H1 (cell line): ENCODE measurements at regions of chr20 and their contacts with region 1.

Region 1: DNA sequence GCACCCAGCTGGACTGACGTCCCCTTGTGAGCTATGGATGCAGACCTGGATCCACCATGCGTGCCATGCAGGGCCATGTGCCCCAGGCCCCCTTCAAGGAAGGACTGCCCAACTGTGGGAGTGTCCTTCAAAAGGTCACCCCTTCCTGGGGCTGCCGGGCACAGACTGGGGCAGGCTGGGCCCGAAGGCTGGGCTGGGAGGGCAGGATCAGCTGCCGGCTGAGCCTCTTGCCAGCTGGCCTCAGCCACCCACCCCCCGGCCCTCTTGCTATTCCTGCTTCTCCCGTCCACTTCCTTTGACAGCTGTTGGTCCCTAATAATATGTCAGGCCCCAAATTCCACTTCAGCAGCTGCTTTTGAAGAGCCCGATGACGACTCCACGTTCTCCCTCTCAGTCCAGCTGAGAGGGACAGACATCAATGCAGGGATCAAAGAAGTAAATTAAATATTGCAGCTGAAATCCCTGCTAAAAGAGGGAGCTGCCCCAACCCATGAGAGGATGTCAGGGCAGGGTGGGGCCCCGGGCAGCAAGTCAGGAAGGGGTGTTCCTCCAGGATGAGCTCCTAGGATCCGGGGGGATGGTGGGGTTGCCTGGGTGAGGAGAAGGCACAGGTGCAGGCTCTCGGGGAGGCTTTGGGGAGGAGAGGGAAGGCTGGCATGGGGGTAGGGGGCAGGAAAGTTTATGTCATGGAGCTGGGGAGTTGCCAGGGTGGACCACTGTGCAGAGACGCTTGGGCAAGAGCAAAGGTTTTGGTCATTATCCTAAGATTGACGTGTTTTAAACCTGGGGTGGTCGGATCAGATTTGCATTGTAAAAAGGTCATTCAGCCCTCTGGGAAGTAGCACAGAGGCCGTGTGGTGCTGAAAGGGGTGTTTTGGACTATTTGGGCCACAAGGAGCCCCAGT is 185.0 kb downstream of the ANKRD60 start:
- DNase-seq: peak in 1 of 2 experiments; percentile 40
- H3K4me3 ChIP-seq: no peak overlapping the region
- H3K27ac ChIP-seq: no peak overlapping the region
- H3K4me1 ChIP-seq: peaks cover 0 to 4% (median 3%) of the 10 kb centered on the region in 4 experiments; a peak in 4 of 7 replicates
- H3K27me3 ChIP-seq: no peaks in the 10 kb centered on the region
- CTCF ChIP-seq: no peak
- EP300 ChIP-seq: no peak
- POLR2A ChIP-seq: no peak
- RAD21 ChIP-seq: no peak

Region 2: GRCh38 chr20:58028123-58028522 is 15.4 kb before region 1 on chr20:
- CTCF ChIA-PET with region 1: interaction called, 10 read pairs
- POLR2A ChIA-PET with region 1: no interaction called
- DNase-seq: peak in 1 of 2 experiments; percentile 76
- H3K4me3 ChIP-seq: no peak overlapping the region
- H3K27ac ChIP-seq: no peak overlapping the region
- H3K4me1 ChIP-seq: no peaks in the 10 kb centered on the region
- H3K27me3 ChIP-seq: no peaks in the 10 kb centered on the region; a peak in 2 of 7 replicates
- CTCF ChIP-seq: peak; percentile 60 to 74 (median 63)
- EP300 ChIP-seq: no peak
- POLR2A ChIP-seq: no peak
- RAD21 ChIP-seq: peak; percentile 75 to 81